ENCODE measurements at regions of chr11 and their contacts with region 1.

Region 1: DNA sequence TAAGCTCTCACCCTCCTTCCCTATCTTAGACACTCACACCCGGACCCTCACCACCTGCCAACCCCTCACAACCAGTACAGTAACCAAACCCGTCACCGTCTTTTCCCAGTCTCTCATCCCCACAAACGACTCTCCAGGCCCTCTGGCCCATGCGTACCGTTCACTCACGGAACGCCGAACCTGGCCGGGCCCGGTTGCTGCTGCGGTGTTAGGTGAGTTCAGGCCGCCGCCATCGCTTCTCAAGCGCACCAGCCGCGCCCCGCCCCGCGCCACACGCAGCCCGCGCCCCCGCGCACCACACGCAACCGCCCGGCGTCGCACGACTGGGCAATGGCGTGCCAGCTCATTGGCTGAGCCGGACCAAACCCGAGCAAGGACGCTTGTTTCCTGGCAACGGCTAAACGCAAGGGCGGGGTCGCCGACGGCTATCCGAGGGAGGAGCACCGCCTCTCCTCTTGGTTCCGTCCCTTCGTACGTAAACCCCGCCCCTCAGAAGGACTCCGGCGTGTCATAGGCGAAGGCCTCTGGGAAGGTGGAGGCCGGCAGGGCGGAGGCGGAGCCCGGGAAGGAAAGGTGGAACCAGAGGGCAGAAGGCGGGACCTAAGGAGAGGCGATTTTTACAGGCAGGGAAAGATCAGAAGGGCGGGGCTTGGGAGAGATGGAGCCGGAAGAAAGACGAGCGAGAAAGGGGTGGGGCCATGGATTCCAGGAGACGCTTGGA is at the start of gene FHIP1B:
- DNase-seq: peak; percentile 95 to 100 (median 100)
- ATAC-seq: peak; percentile 95
- H3K4me3 ChIP-seq: peak within 1 kb of the TSS; percentile 96
- H3K4me3 Mint-ChIP-seq: peak within 1 kb of the TSS; percentile 90 to 100 (median 98)
- H3K27ac ChIP-seq: peak within 1 kb of the TSS; percentile 81
- H3K27ac Mint-ChIP-seq: peak within 1 kb of the TSS; percentile 87 to 100 (median 97)
- H3K4me1 ChIP-seq: peaks cover 14 to 19% of the 10 kb centered on the region in 2 donors
- H3K4me1 Mint-ChIP-seq: peaks cover 36 to 55% (median 50%) of the 10 kb centered on the region in 7 donors
- H3K27me3 ChIP-seq: no peaks in the 10 kb centered on the region
- H3K27me3 Mint-ChIP-seq: no peaks in the 10 kb centered on the region
- total RNA-seq, gene FHIP1B: 26.8 to 52.4 (median 44.3) TPM

Region 2: DNA sequence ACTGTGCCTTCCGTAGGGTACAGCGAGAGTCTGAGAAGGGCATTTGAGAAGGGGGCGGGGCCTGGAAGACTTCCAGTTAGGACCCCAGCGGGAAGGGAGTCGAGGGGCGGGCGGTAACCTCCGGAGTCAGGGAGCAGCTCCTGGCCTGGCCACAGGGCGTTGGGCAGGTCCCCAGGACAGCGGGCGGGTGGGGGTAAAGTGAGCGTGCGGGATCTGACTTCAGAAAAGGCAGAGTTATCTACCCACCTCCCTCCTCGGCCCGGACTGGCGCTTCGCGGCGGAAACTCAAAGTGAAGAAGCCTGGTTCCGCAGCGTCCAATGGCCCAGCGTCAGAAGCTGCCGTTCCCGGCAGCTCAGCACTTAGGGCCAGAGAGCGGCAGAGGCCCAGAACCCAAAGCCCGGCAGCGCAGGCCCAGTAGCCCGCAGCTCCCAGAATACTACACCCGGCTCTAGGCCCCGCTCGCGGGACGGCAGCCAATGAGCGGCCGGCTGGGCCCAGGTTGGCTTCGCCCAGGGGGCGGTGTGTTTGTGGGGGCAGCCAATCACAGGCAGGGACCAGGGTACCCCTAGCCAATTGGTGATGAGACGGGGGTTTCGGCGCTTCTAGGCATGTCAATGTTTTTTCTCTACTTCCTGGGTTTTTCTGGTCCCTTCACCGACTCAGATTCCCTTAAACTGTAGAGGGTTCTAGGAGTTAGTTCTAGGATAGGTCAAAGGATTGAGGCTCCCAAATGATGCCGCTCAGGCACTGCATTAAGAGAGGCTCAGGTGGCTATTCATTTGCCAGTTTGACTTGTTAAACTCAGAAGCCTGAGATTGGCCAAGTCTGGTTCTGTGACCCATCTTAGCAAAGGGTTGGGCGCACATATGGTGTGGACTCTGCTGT is 1626.5 kb before region 1 on chr11 and contains the start of gene TRIM68:
- CTCF ChIA-PET with region 1: no interaction called
- POLR2A ChIA-PET with region 1: no interaction called
- intact Hi-C with region 1: loop called in 1 of 2 experiments (anchors 1 kb)
- DNase-seq: peak; percentile 87 to 96 (median 94)
- ATAC-seq: peak; percentile 100
- H3K4me3 ChIP-seq: peak within 1 kb of the TSS; percentile 80
- H3K4me3 Mint-ChIP-seq: peak within 1 kb of the TSS; percentile 80 to 97 (median 91)
- H3K27ac ChIP-seq: peak within 1 kb of the TSS; percentile 88
- H3K27ac Mint-ChIP-seq: peak within 1 kb of the TSS; percentile 85 to 96 (median 94)
- H3K4me1 ChIP-seq: peaks cover 15 to 22% of the 10 kb centered on the region in 2 donors
- H3K4me1 Mint-ChIP-seq: peaks cover 29 to 68% (median 56%) of the 10 kb centered on the region in 7 donors
- H3K27me3 ChIP-seq: no peaks in the 10 kb centered on the region
- H3K27me3 Mint-ChIP-seq: peaks cover 0 to 2% (median 0%) of the 10 kb centered on the region in 5 donors
- total RNA-seq, gene TRIM68: 3.8 to 29.5 (median 12.4) TPM

Region 3: GRCh38 chr11:6040874-6041273 is 193.7 kb before region 1 on chr11:
- CTCF ChIA-PET with region 1: no interaction called
- POLR2A ChIA-PET with region 1: no interaction called
- intact Hi-C with region 1: no loop called
- DNase-seq: no peak
- ATAC-seq: no peak
- H3K4me3 ChIP-seq: no peak overlapping the region
- H3K4me3 Mint-ChIP-seq: no peak overlapping the region
- H3K27ac ChIP-seq: no peak overlapping the region
- H3K27ac Mint-ChIP-seq: no peak overlapping the region
- H3K4me1 ChIP-seq: no peaks in the 10 kb centered on the region
- H3K4me1 Mint-ChIP-seq: no peaks in the 10 kb centered on the region
- H3K27me3 ChIP-seq: no peaks in the 10 kb centered on the region
- H3K27me3 Mint-ChIP-seq: peaks cover 5 to 28% (median 19%) of the 10 kb centered on the region in 5 donors

Region 4: GRCh38 chr11:6258571-6259081 is 24.1 kb after region 1 on chr11:
- CTCF ChIA-PET with region 1: no interaction called
- POLR2A ChIA-PET with region 1: no interaction called
- intact Hi-C with region 1: loop called in 1 of 2 experiments (anchors 1 kb)
- DNase-seq: no peak
- ATAC-seq: peak; percentile 44
- H3K4me3 ChIP-seq: peak overlapping the region; percentile 57
- H3K4me3 Mint-ChIP-seq: peak overlapping the region in 6 of 10 donors; percentile 64 to 86 (median 82)
- H3K27ac ChIP-seq: no peak overlapping the region
- H3K27ac Mint-ChIP-seq: no peak overlapping the region
- H3K4me1 ChIP-seq: peaks cover 0 to 13% of the 10 kb centered on the region in 2 donors
- H3K4me1 Mint-ChIP-seq: peaks cover 0 to 10% (median 0%) of the 10 kb centered on the region in 7 donors
- H3K27me3 ChIP-seq: peaks cover 8 to 15% of the 10 kb centered on the region in 2 donors
- H3K27me3 Mint-ChIP-seq: peaks cover 0 to 17% (median 8%) of the 10 kb centered on the region in 5 donors

Region 5: GRCh38 chr11:6481012-6481923 is 246.7 kb after region 1 on chr11 and contains the starts of genes ARFIP2 and TIMM10B:
- CTCF ChIA-PET with region 1: no interaction called
- POLR2A ChIA-PET with region 1: interaction called, 4 read pairs
- intact Hi-C with region 1: loop called (anchors 1 kb)
- DNase-seq: peak; percentile 83 to 98 (median 94)
- ATAC-seq: peak; percentile 98
- H3K4me3 ChIP-seq: peak within 1 kb of the TSS; percentile 74
- H3K4me3 Mint-ChIP-seq: peak within 1 kb of the TSS; percentile 87 to 99 (median 97)
- H3K27ac ChIP-seq: peak within 1 kb of the TSS; percentile 86
- H3K27ac Mint-ChIP-seq: peak within 1 kb of the TSS; percentile 93 to 99 (median 98)
- H3K4me1 ChIP-seq: peaks cover 22 to 24% of the 10 kb centered on the region in 2 donors
- H3K4me1 Mint-ChIP-seq: peaks cover 29 to 48% (median 43%) of the 10 kb centered on the region in 7 donors
- H3K27me3 ChIP-seq: no peaks in the 10 kb centered on the region
- H3K27me3 Mint-ChIP-seq: no peaks in the 10 kb centered on the region
- total RNA-seq, gene ARFIP2: 48.6 to 63.4 (median 53.8) TPM
- total RNA-seq, gene TIMM10B: 39.3 to 68.4 (median 59.2) TPM

Region 6: DNA sequence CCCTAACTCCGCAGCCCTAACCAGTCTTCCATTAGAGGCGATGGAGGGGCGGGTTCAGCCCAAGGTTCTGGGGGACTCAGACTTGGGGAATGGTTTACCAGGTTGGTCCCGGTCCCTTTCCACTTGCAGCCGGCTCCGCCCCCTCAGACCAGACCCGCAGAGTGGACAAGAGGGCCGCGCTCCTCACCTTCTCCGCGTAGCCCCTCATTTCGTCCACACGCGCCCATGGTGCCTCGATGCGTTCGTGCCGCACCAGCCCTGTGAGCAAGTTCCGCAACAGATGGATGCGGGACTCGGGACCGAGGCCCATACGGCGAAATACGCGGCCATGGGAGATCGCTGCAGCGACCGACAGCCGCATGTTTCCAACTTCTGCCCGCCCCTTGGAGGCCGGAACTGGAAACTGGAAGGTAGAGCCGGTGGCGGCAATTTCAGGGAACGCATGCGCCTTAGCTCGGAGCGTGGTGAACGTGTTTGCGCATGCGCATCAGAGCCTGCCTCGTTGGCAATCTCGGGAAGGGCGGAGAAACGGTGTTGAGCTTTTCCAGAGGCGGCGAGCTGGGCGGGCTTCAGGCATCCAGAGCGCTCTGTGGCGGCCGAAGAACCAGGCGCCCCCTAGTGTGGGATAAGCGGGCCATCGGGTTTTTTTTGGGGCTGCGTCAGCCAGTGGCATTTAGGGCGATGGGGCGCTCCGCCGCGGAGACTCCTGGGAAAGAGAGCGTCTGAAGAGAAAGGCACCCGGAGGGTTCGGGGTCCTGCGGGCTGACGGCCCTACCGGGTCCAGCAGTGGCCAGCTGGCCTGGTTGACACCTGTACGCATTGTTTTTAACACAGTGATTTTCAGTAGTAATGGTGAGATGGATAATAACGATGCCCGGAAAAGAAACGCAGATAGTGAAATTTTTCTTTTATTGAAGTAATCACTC is 448.7 kb after region 1 on chr11 and contains the start of gene MRPL17:
- CTCF ChIA-PET with region 1: no interaction called
- POLR2A ChIA-PET with region 1: no interaction called
- intact Hi-C with region 1: loop called (anchors 1 to 2 kb)
- DNase-seq: peak; percentile 95 to 100 (median 99)
- ATAC-seq: peak; percentile 99
- H3K4me3 ChIP-seq: peak within 1 kb of the TSS; percentile 75
- H3K4me3 Mint-ChIP-seq: peak within 1 kb of the TSS; percentile 83 to 99 (median 98)
- H3K27ac ChIP-seq: peak within 1 kb of the TSS; percentile 85
- H3K27ac Mint-ChIP-seq: peak within 1 kb of the TSS; percentile 94 to 99 (median 99)
- H3K4me1 ChIP-seq: peaks cover 7 to 10% of the 10 kb centered on the region in 2 donors
- H3K4me1 Mint-ChIP-seq: peaks cover 18 to 58% (median 44%) of the 10 kb centered on the region in 7 donors
- H3K27me3 ChIP-seq: no peaks in the 10 kb centered on the region
- H3K27me3 Mint-ChIP-seq: peaks cover 0 to 3% (median 0%) of the 10 kb centered on the region in 5 donors
- total RNA-seq, gene MRPL17: 10.0 to 70.3 (median 26.4) TPM

Region 7: GRCh38 chr11:7986768-7987559 is 1752.4 kb after region 1 on chr11 and contains the start of gene EIF3F:
- CTCF ChIA-PET with region 1: no interaction called
- POLR2A ChIA-PET with region 1: no interaction called
- intact Hi-C with region 1: loop called (anchors 2 to 10 kb)
- DNase-seq: peak; percentile 64 to 98 (median 95)
- ATAC-seq: peak; percentile 98
- H3K4me3 ChIP-seq: peak within 1 kb of the TSS; percentile 70
- H3K4me3 Mint-ChIP-seq: peak within 1 kb of the TSS; percentile 85 to 99 (median 92)
- H3K27ac ChIP-seq: peak within 1 kb of the TSS; percentile 78
- H3K27ac Mint-ChIP-seq: peak within 1 kb of the TSS; percentile 88 to 100 (median 97)
- H3K4me1 ChIP-seq: peaks cover 20 to 31% of the 10 kb centered on the region in 2 donors
- H3K4me1 Mint-ChIP-seq: peaks cover 29 to 64% (median 49%) of the 10 kb centered on the region in 7 donors
- H3K27me3 ChIP-seq: no peaks in the 10 kb centered on the region
- H3K27me3 Mint-ChIP-seq: no peaks in the 10 kb centered on the region
- total RNA-seq, gene EIF3F: 222 to 405 (median 353) TPM

Measured in naive thymus-derived CD4-positive, alpha-beta T cell (primary cell).